Lower lobe of right lung (tissue), 2 donors: ENCODE measurements at regions of chr7 and their contacts with region 1.

Region 1: GRCh38 chr7:110296321-110296720 is 794.6 kb upstream of the LRRN3 start:
- DNase-seq: no peak
- ATAC-seq: no peak
- H3K4me3 ChIP-seq: no peak overlapping the region
- H3K27ac ChIP-seq: no peak overlapping the region
- H3K4me1 ChIP-seq: no peaks in the 10 kb centered on the region
- H3K27me3 ChIP-seq: no peaks in the 10 kb centered on the region
- CTCF ChIP-seq: no peak

Region 2: DNA sequence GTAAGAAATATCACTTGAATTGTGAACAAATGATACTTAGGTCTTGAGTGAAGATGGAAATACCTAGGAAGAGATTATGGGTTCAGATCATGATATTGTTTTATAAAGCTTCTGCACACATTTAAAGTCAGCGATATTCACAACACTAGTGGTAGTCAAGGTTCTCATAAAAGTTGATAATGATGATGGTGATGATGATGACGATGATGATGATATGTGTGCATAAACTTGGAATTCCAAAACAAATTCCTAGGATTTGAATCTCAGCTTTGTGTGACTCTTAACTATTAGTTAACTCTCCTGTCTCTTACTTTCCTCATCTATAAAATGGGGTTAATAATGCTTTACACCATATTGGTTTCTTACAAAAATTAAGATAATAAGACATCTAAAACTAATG is 802.4 kb before region 1 on chr7:
- intact Hi-C with region 1: loop called (anchors 5 kb)
- DNase-seq: no peak
- ATAC-seq: no peak
- H3K4me3 ChIP-seq: no peak overlapping the region
- H3K27ac ChIP-seq: no peak overlapping the region
- H3K4me1 ChIP-seq: no peaks in the 10 kb centered on the region
- H3K27me3 ChIP-seq: no peaks in the 10 kb centered on the region
- CTCF ChIP-seq: no peak

Region 3: GRCh38 chr7:110090110-110090769 is 206.1 kb before region 1 on chr7:
- intact Hi-C with region 1: no loop called
- DNase-seq: no peak
- ATAC-seq: no peak
- H3K4me3 ChIP-seq: no peak overlapping the region
- H3K27ac ChIP-seq: no peak overlapping the region
- H3K4me1 ChIP-seq: no peaks in the 10 kb centered on the region
- H3K27me3 ChIP-seq: no peaks in the 10 kb centered on the region
- CTCF ChIP-seq: peak; percentile 28

Region 4: GRCh38 chr7:110960811-110961210 is 664.5 kb after region 1 on chr7:
- intact Hi-C with region 1: no loop called
- DNase-seq: no peak
- ATAC-seq: no peak
- H3K4me3 ChIP-seq: no peak overlapping the region
- H3K27ac ChIP-seq: no peak overlapping the region
- H3K4me1 ChIP-seq: no peaks in the 10 kb centered on the region
- H3K27me3 ChIP-seq: no peaks in the 10 kb centered on the region
- CTCF ChIP-seq: no peak